HCT116 (cell line): ENCODE measurements at regions of chr10 and their contacts with region 1.

Region 1: GRCh38 chr10:68560186-68560942 is at the start of gene TET1:
- DNase-seq: peak; percentile 33
- ATAC-seq: peak; percentile 78
- H3K4me3 ChIP-seq: peak within 1 kb of the TSS; percentile 68 to 82
- H3K27ac ChIP-seq: peak within 1 kb of the TSS; percentile 61; the same call in 1 of the 2 replicates
- H3K4me1 ChIP-seq: peaks cover 0 to 14% of the 10 kb centered on the region in 2 experiments; a peak in 3 of 4 replicates
- H3K27me3 ChIP-seq: no peaks in the 10 kb centered on the region
- CTCF ChIP-seq: no peak
- POLR2A ChIP-seq: peak; percentile 64
- RAD21 ChIP-seq: no peak
- total RNA-seq, gene TET1: 2.7 TPM

Region 2: GRCh38 chr10:68600041-68600778 is 39.8 kb after region 1 on chr10:
- CTCF ChIA-PET with region 1: no interaction called
- POLR2A ChIA-PET with region 1: interaction called, 12 read pairs
- RAD21 ChIA-PET with region 1: no interaction called
- intact Hi-C with region 1: loop called (anchors 1 kb)
- DNase-seq: peak; percentile 70
- ATAC-seq: peak; percentile 93
- H3K4me3 ChIP-seq: peak overlapping the region; percentile 35 to 58
- H3K27ac ChIP-seq: peak overlapping the region; percentile 59
- H3K4me1 ChIP-seq: peaks cover 18 to 31% of the 10 kb centered on the region in 2 experiments
- H3K27me3 ChIP-seq: no peaks in the 10 kb centered on the region
- CTCF ChIP-seq: no peak
- POLR2A ChIP-seq: peak; percentile 21
- RAD21 ChIP-seq: peak; percentile 21; the same call in 1 of the 2 replicates

Region 3: GRCh38 chr10:69757553-69758309 is 1197.4 kb after region 1 on chr10:
- CTCF ChIA-PET with region 1: no interaction called
- POLR2A ChIA-PET with region 1: no interaction called
- RAD21 ChIA-PET with region 1: no interaction called
- intact Hi-C with region 1: no loop called
- DNase-seq: no peak
- ATAC-seq: no peak
- H3K4me3 ChIP-seq: no peak overlapping the region
- H3K27ac ChIP-seq: no peak overlapping the region
- H3K4me1 ChIP-seq: no peaks in the 10 kb centered on the region
- H3K27me3 ChIP-seq: no peaks in the 10 kb centered on the region
- CTCF ChIP-seq: no peak
- POLR2A ChIP-seq: no peak
- RAD21 ChIP-seq: no peak